BJ (cell line): ENCODE measurements at regions of chr22 and their contacts with region 1.

Region 1: DNA sequence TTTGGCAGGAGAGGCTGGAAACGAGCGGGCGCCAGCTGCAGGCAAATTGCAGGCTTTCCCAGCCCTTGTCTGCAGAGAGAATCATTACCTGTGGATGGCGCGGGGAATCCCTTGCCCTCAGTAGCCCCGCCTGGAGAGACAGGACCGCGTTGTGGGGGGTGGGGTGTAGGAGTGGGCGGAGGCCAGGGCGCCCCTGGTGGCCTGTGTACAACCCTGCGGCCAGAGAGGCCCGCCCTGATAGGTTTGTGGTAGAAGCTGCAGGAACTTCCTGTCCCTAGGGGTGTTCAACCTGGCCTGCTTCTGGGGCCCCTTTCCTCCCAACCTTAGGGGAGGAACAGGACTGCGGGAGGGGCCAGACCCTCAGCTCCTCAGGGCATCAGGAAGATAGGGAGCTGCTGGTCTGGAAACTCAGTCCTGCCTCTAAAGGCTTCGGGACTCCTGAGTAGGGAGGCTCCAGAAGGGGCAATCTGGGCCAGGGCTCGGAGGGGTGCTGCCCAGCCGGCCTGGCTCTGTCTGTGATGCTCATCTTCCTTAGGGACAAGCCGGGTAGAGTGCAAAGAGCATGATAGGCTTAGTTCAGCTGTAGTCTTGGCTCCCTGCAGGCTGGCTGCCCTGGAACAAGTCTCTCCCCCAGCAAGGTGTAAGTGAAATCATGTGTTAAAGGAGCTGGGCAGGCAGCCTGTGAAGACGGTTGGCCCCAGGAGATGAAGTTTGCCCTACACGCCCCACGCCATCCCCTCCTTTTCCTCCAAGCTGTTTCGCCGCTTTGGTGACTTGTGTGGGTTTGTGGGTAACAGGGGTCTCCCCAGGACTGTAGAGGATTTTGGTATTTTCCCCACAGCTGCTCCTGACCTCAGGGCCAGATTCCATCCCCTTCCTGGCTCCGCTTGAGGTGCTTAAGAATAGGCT is 24.1 kb upstream of the SUSD2 start:
- DNase-seq: no peak
- H3K4me3 ChIP-seq: peak overlapping the region; percentile 65
- H3K27me3 ChIP-seq: no peaks in the 10 kb centered on the region
- CTCF ChIP-seq: peak; percentile 96

Region 2: DNA sequence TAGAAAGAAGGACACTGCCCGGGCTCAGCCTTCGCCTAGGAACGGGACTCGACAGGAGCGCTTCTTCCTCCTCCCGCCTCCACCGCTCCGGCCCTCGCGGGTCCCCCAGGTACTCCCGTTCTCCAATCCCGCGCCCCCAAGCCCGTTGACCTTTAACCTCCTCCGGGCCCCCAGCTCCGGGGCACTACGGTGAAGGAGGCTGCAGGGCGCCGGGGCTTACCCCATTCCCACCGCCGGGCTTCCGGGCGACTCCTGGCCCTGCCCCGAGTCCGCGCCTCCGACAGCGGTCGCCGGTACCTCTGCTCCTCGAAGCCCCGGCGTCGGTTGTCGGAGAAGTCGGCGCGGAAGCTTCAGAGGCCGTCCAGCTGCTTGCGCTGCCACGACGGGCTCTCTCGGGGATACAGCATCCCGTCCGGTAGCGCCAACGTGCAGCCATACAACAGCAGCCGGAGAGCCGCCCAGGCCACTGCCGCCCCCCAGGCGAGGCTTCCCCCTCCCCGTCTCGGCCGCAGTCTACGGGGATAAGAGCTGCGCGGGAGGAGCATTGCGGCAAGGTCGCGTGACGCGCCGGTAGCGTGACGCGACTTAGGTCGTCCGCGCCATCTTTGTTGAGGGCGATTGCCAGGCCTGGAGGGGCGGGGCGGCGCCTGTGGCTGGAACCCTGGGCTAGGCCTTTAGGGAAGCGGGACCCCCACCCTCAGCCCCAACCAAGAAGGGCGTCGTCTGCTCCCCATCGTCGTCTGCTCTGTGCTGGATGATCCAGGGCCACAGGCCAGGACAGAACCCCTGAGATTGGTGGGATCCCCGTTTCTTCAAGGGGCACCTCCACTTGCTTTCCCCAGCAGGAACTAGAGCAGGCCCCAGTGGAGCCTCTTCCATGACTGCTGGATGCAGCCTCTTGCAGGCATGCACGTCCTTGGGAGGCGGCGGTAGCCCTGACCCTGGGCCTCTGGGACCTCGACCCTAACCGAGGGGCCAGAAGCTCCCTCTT is 440.1 kb before region 1 on chr22:
- CTCF ChIA-PET with region 1: no interaction called
- POLR2A ChIA-PET with region 1: no interaction called
- DNase-seq: peak; percentile 19
- H3K4me3 ChIP-seq: peak overlapping the region; percentile 84
- H3K27me3 ChIP-seq: no peaks in the 10 kb centered on the region
- CTCF ChIP-seq: no peak

Region 3: DNA sequence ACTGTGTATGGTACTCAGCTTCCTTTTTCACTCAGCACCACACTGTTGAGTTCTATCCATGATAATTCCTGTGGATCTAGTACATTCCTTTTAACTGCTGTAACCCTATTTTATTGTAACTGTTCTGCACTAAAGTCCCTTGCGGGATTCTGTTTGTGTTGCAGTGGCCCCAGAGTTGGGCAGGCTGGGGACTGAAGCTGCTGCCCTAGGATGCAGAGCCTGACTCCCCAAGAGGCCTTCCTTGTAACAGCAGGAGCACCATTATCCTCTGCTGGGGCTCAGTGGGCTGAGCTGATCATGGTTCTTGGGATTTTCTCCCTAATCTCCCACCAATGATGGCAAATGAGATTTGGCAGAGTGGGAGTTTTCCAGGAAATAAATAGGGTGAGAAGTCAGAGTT is 68.4 kb before region 1 on chr22:
- CTCF ChIA-PET with region 1: interaction called, 12 read pairs
- POLR2A ChIA-PET with region 1: no interaction called
- DNase-seq: peak; percentile 37
- H3K4me3 ChIP-seq: no peak overlapping the region
- H3K27me3 ChIP-seq: no peaks in the 10 kb centered on the region
- CTCF ChIP-seq: no peak

Region 4: DNA sequence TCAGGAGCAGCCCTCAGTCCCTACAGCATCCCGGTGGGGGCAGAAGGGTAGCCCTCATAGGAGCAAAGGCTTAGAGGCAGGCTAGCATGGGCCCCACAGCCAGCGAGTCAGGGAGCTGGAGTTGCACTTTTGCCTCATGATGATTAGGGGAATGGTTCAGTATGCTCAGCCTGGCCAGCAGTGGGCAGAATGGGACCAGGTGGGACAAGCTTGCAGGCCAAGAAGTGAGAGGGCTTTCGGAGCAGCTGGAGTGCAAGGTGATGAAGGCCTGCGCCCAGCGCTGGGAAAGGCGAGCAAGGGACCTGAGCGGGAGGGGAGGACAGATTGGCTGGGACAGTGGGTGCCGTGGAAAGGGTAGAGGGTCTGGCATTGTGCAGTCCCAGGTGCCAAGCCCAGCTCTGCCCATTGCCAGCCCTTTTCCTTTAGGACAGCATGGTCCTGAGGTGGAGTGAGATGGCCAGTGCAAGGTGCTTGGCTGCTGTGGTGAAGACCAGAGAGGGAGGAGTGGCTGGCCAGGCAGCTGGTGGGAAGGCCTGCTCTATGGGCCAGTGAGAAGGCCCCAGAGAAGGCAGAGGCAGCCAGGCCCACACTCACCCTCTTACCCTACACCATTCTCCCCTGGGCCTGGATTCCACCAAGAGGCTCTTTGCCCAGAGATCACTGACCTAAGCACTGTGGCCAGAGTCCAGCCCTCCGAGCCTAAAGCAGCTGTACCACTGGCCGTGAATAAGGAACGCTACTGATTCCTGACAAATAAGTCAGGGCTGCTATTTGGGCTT is 23.8 kb before region 1 on chr22:
- CTCF ChIA-PET with region 1: interaction called, 13 read pairs
- POLR2A ChIA-PET with region 1: no interaction called
- DNase-seq: no peak
- H3K4me3 ChIP-seq: no peak overlapping the region
- H3K27me3 ChIP-seq: no peaks in the 10 kb centered on the region
- CTCF ChIP-seq: peak; percentile 42

Region 5: DNA sequence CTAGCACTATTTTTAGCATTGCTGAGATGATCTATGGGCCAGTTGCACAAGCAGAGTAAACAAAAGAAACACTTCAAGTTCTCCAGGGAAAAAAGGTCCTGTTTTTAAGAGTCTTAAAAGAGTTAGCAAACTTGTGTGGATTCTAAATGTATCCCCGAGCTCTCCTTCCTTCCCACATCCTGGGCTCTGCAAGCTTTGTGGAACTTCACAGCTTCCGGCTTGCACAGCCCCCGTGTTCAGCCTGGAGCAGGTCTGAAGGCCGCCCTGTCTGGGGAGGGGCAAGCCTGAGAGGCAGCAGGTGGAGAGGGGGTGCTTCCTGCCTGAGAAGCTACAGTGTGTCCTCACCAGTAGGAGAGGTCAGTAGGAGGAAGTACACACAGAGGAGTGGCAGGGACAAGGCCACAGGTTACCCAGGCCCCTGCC is 11.0 kb before region 1 on chr22:
- CTCF ChIA-PET with region 1: interaction called, 35 read pairs
- POLR2A ChIA-PET with region 1: no interaction called
- DNase-seq: peak; percentile 50
- H3K4me3 ChIP-seq: no peak overlapping the region
- H3K27me3 ChIP-seq: no peaks in the 10 kb centered on the region
- CTCF ChIP-seq: no peak

Region 6: GRCh38 chr22:24189249-24190158 is 32.3 kb after region 1 on chr22:
- CTCF ChIA-PET with region 1: interaction called, 17 read pairs
- POLR2A ChIA-PET with region 1: no interaction called
- DNase-seq: no peak
- H3K4me3 ChIP-seq: no peak overlapping the region
- H3K27me3 ChIP-seq: no peaks in the 10 kb centered on the region
- CTCF ChIP-seq: peak; percentile 95

Region 7: DNA sequence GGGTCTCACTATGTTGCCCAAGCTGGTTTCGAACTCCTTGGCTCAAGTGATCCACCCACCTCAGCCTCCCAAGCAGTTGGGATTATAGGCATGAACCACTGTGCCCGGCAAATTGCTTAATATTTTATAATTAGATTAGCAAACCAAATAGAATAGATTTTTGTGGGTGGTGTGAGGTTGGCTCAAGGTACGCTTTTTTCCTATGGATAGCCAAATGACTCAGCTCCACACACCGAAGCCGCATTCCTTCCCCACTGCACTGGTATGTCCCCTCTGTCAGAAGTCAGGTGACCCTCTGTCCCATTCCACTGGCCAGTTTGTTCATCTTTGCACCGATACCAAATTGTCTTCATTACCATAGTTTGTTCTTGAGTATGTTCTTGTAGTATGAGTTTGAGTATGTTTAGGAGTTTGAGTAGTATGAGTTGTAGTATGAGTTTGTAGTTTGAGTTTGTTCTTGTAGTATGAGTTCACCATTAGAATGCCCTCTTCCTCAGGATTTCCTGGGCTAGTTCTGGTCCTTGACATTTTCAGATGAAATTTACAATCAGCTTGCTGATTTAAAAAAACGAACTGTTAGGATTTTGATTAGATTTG is 43.5 kb after region 1 on chr22:
- CTCF ChIA-PET with region 1: no interaction called
- POLR2A ChIA-PET with region 1: no interaction called
- DNase-seq: no peak
- H3K4me3 ChIP-seq: no peak overlapping the region
- H3K27me3 ChIP-seq: no peaks in the 10 kb centered on the region
- CTCF ChIP-seq: no peak